Vagina (tissue), 2 donors: ENCODE measurements at regions of chr5 and their contacts with region 1.

Region 1: GRCh38 chr5:6788956-6789649 is 75.9 kb downstream of the TENT4A start:
- DNase-seq: peak in 1 of 2 donors; percentile 54
- H3K4me3 ChIP-seq: no peak overlapping the region
- H3K27ac ChIP-seq: no peak overlapping the region
- H3K4me1 ChIP-seq: no peaks in the 10 kb centered on the region
- H3K27me3 ChIP-seq: no peaks in the 10 kb centered on the region
- CTCF ChIP-seq: no peak
- POLR2A ChIP-seq: no peak

Region 2: DNA sequence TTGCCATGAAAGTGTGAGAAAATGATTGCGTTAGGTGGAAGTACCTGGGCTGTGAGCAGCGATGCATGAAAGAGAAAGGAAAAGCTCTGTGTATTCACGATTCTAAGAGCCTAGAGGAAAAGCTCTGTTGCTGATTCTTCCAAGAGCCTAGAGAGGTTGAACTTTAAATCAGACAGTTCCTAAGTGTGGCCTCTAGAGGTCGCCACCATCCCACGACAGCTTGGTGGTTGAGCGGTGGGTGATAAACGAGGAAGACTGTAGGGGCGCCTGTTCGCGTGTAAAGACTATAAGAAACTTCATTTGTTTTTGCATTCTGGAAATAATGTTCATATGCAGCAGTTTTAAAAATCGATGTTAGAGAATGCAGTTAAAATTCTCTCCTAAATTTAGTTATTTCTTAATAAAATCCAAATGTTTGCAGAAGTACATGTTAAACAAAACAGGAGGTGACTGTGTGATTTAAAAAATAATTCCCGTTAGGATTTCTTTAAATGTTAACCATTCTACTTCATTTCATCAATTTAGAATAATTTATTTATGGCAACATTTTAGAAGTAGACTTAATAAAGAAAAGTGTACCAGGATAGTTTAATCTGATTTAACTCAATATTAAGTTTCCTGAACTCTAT is 31.9 kb after region 1 on chr5:
- intact Hi-C with region 1: loop called (anchors 1 kb)
- DNase-seq: no peak
- H3K4me3 ChIP-seq: no peak overlapping the region
- H3K27ac ChIP-seq: no peak overlapping the region
- H3K4me1 ChIP-seq: no peaks in the 10 kb centered on the region
- H3K27me3 ChIP-seq: no peaks in the 10 kb centered on the region
- CTCF ChIP-seq: no peak
- POLR2A ChIP-seq: no peak

Region 3: GRCh38 chr5:8773046-8773615 is 1984.0 kb after region 1 on chr5:
- intact Hi-C with region 1: no loop called
- DNase-seq: no peak
- H3K4me3 ChIP-seq: no peak overlapping the region
- H3K27ac ChIP-seq: no peak overlapping the region
- H3K4me1 ChIP-seq: no peaks in the 10 kb centered on the region
- H3K27me3 ChIP-seq: no peaks in the 10 kb centered on the region
- CTCF ChIP-seq: no peak
- POLR2A ChIP-seq: no peak